CD8-positive, alpha-beta T cell (primary cell): ENCODE measurements at regions of chr1 and their contacts with region 1.

Region 1: GRCh38 chr1:211133836-211134669 is at the start of gene KCNH1:
- DNase-seq: peak; percentile 67 to 89 (median 80)
- ATAC-seq: peak; percentile 95
- H3K4me3 ChIP-seq: peak within 1 kb of the TSS; percentile 38 to 40
- H3K4me3 Mint-ChIP-seq: peak within 1 kb of the TSS; percentile 77
- H3K27ac ChIP-seq: no peak within 1 kb of the TSS
- H3K27ac Mint-ChIP-seq: no peak within 1 kb of the TSS
- H3K4me1 ChIP-seq: peaks cover 13% of the 10 kb centered on the region
- H3K4me1 Mint-ChIP-seq: peaks cover 9% of the 10 kb centered on the region
- H3K27me3 ChIP-seq: peaks cover 0 to 7% of the 10 kb centered on the region in 2 experiments
- H3K27me3 Mint-ChIP-seq: peaks cover 37% of the 10 kb centered on the region
- CTCF ChIP-seq: peak; percentile 97
- total RNA-seq, gene KCNH1: not detected

Region 2: DNA sequence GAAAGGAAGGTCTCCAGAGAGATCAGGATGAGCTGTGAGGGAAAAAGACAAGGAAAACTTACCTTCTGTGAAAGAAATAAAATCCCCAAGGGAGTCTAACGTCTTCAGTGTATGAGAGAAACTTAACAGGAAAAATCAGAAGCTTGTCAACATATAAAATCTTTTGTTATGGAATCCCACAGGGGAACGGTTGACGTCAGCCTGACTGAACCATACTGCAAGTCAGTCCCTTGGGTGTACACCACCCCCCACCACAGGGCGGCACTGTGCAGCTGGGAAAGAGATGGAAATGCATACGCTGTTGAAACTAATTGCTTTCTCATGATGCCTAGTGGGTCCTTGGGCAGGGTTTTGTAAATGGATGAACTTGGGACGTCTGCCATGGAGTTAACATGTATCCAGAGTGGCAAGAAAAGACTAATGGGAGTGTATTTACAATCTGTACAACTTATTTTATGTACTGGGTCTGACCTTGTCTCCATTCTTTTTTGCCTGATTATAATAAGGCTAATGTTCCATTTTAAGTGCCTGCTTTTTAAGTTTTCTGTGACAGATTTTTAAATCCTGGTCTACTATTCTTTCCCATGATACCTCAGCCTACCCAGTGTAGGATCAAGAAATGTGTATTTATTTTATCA is 1283.6 kb before region 1 on chr1:
- CTCF ChIA-PET with region 1: no interaction called
- POLR2A ChIA-PET with region 1: no interaction called
- intact Hi-C with region 1: loop called in 1 of 2 experiments (anchors 10 kb)
- DNase-seq: peak in 3 of 9 experiments; percentile 8 to 24 (median 15)
- ATAC-seq: no peak
- H3K4me3 ChIP-seq: no peak overlapping the region
- H3K4me3 Mint-ChIP-seq: no peak overlapping the region
- H3K27ac ChIP-seq: no peak overlapping the region
- H3K27ac Mint-ChIP-seq: peak overlapping the region; percentile 62
- H3K4me1 ChIP-seq: no peaks in the 10 kb centered on the region
- H3K4me1 Mint-ChIP-seq: peaks cover 11% of the 10 kb centered on the region
- H3K27me3 ChIP-seq: no peaks in the 10 kb centered on the region
- H3K27me3 Mint-ChIP-seq: no peaks in the 10 kb centered on the region
- CTCF ChIP-seq: no peak

Region 3: GRCh38 chr1:210407207-210407886 is 726.7 kb before region 1 on chr1:
- CTCF ChIA-PET with region 1: interaction called, 5 read pairs
- POLR2A ChIA-PET with region 1: no interaction called
- intact Hi-C with region 1: loop called in 1 of 2 experiments (anchors 1 kb)
- DNase-seq: peak; percentile 33 to 85 (median 70)
- ATAC-seq: peak; percentile 64
- H3K4me3 ChIP-seq: no peak overlapping the region
- H3K4me3 Mint-ChIP-seq: no peak overlapping the region
- H3K27ac ChIP-seq: no peak overlapping the region
- H3K27ac Mint-ChIP-seq: no peak overlapping the region
- H3K4me1 ChIP-seq: no peaks in the 10 kb centered on the region
- H3K4me1 Mint-ChIP-seq: peaks cover 3% of the 10 kb centered on the region
- H3K27me3 ChIP-seq: no peaks in the 10 kb centered on the region
- H3K27me3 Mint-ChIP-seq: no peaks in the 10 kb centered on the region
- CTCF ChIP-seq: peak; percentile 92

Region 4: DNA sequence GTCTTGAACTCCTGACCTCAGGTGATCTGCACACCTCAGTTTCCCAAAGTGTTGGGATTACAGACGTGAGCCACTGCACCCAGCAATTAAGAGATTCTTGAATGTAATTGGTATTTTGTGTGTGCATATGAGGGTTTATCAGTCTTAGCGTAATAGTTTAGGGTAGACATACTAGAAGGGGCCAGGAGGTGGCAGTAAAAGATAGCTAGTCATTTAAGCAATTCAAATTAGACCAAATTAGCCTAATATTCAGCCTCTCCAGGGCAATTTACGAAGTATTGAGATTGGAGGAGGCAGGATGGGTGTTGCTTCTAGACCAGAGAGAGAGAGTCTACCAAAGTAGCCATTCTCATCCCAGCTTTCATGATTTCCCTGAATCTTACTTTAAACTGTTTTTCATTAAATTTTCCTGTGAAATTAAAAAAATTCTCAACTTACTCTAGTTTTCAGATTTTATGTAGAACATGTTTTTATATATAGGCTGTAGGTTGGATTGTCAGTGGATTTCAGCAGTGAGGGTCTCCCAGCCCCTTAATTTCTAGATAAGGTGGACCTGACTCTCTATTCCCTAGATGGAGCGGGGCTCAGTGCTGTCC is 685.7 kb before region 1 on chr1:
- CTCF ChIA-PET with region 1: interaction called, 8 read pairs
- POLR2A ChIA-PET with region 1: no interaction called
- intact Hi-C with region 1: loop called in 1 of 2 experiments (anchors 2 kb)
- DNase-seq: peak in 2 of 9 experiments; percentile 43 to 52
- ATAC-seq: no peak
- H3K4me3 ChIP-seq: no peak overlapping the region
- H3K4me3 Mint-ChIP-seq: no peak overlapping the region
- H3K27ac ChIP-seq: no peak overlapping the region
- H3K27ac Mint-ChIP-seq: no peak overlapping the region
- H3K4me1 ChIP-seq: peaks cover 9% of the 10 kb centered on the region
- H3K4me1 Mint-ChIP-seq: peaks cover 15% of the 10 kb centered on the region
- H3K27me3 ChIP-seq: no peaks in the 10 kb centered on the region
- H3K27me3 Mint-ChIP-seq: no peaks in the 10 kb centered on the region
- CTCF ChIP-seq: peak; percentile 59

Region 5: DNA sequence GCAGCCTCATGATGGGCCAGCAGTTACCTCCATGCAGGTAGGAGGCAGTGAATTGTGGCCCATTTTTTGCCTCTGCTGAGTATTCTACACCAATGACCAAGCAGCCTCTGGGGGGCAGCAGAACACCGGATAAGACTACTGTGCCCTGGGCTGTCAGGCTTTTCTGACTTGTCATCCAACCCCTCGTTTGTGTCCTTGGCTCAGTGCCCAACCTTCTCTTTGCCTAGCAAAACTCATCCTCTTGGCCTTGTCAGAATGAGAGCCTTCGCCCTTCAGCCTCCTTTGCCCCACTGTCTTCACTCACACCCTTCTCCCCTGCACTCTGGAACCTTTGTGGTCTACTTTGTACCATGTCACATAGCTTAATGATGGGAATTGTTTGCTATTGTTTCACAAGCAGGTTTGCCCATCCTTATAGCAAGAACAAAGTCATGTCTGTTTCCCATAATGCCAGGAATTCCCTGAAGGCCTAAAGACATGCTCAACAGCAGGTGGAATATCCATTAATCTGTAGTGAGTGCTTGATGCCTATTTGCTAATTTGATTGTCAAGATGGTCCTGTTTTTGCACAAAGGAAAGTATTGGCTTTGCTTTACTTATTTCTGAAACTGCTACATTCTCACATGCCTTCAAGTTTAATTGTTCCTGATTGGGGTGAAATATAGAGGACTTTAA is 549.5 kb before region 1 on chr1:
- CTCF ChIA-PET with region 1: interaction called, 5 read pairs
- POLR2A ChIA-PET with region 1: no interaction called
- intact Hi-C with region 1: loop called in 1 of 2 experiments (anchors 1 kb)
- DNase-seq: peak; percentile 37 to 72 (median 63)
- ATAC-seq: no peak
- H3K4me3 ChIP-seq: no peak overlapping the region
- H3K4me3 Mint-ChIP-seq: no peak overlapping the region
- H3K27ac ChIP-seq: no peak overlapping the region
- H3K27ac Mint-ChIP-seq: no peak overlapping the region
- H3K4me1 ChIP-seq: peaks cover 4% of the 10 kb centered on the region
- H3K4me1 Mint-ChIP-seq: peaks cover 15% of the 10 kb centered on the region
- H3K27me3 ChIP-seq: no peaks in the 10 kb centered on the region
- H3K27me3 Mint-ChIP-seq: no peaks in the 10 kb centered on the region
- CTCF ChIP-seq: peak; percentile 41

Region 6: GRCh38 chr1:211492511-211493132 is 358.6 kb after region 1 on chr1:
- CTCF ChIA-PET with region 1: no interaction called
- POLR2A ChIA-PET with region 1: no interaction called
- intact Hi-C with region 1: no loop called
- DNase-seq: no peak
- ATAC-seq: no peak
- H3K4me3 ChIP-seq: no peak overlapping the region
- H3K4me3 Mint-ChIP-seq: no peak overlapping the region
- H3K27ac ChIP-seq: no peak overlapping the region
- H3K27ac Mint-ChIP-seq: no peak overlapping the region
- H3K4me1 ChIP-seq: no peaks in the 10 kb centered on the region
- H3K4me1 Mint-ChIP-seq: no peaks in the 10 kb centered on the region
- H3K27me3 ChIP-seq: no peaks in the 10 kb centered on the region
- H3K27me3 Mint-ChIP-seq: no peaks in the 10 kb centered on the region
- CTCF ChIP-seq: no peak